Mammary epithelial cell (primary cell): ENCODE measurements at regions of chr16 and their contacts with region 1.

Region 1: DNA sequence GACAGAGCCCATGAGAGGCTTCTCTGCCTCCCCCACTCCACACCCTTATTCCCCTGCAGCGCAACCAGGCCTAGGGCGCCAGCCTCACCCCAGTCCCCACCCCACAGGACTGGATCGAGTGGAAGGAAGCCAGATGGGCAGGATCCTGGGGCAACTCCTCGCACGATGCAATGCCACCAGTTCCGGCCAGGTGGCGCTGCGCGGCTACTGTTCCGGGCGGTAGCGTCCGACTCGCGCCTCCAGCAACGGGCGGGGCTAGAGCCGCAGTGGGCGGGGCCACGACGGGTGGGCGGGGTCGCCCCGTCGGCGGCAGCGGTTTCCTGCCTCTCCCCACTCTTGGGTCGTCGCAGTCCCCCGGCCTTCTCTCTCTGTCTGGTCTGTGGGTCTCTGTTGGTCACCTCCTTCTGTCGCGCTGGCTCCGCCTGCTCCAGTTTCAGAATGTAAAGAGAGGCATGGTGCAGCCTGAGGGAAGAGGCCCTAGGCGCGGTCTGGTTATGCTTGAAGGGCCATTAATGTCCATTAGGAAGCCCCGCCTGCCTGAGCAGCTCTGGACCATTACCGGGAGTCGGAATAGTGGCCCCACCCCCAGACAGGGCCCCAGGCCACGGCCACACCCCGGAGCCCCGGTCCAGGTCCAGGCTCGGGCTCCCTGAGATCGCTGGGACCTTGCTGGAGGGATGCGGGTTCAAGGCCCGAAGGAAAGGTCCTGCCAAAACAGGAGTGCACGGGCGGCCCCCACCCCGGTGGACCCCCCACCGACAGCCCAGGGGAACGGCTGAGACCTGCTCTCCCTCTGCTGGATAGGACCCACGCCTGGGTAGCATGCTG is 3.4 kb upstream of the NHERF2 start:
- DNase-seq: peak; percentile 74
- H3K4me3 ChIP-seq: peak overlapping the region in 1 of 3 experiments; percentile 28
- H3K27ac ChIP-seq: no peak overlapping the region
- H3K4me1 ChIP-seq: peaks cover 20% of the 10 kb centered on the region
- H3K27me3 ChIP-seq: peaks cover 11% of the 10 kb centered on the region
- CTCF ChIP-seq: peak; percentile 82 to 91

Region 2: GRCh38 chr16:2047330-2048115 is 24.2 kb after region 1 on chr16 and contains the starts of genes NTHL1 and TSC2:
- CTCF ChIA-PET with region 1: interaction called, 10 read pairs
- dilution Hi-C with region 1: no loop called
- in situ Hi-C with region 1: no loop called
- intact Hi-C with region 1: no loop called
- DNase-seq: peak; percentile 93
- H3K4me3 ChIP-seq: peak within 1 kb of the TSS; percentile 63 to 90 (median 66)
- H3K27ac ChIP-seq: no peak within 1 kb of the TSS
- H3K4me1 ChIP-seq: peaks cover 19% of the 10 kb centered on the region
- H3K27me3 ChIP-seq: no peaks in the 10 kb centered on the region
- CTCF ChIP-seq: peak in 1 of 2 donors; percentile 48
- total RNA-seq, gene NTHL1: 11.3 to 23.2 TPM
- total RNA-seq, gene TSC2: 56.2 to 92.0 TPM

Region 3: DNA sequence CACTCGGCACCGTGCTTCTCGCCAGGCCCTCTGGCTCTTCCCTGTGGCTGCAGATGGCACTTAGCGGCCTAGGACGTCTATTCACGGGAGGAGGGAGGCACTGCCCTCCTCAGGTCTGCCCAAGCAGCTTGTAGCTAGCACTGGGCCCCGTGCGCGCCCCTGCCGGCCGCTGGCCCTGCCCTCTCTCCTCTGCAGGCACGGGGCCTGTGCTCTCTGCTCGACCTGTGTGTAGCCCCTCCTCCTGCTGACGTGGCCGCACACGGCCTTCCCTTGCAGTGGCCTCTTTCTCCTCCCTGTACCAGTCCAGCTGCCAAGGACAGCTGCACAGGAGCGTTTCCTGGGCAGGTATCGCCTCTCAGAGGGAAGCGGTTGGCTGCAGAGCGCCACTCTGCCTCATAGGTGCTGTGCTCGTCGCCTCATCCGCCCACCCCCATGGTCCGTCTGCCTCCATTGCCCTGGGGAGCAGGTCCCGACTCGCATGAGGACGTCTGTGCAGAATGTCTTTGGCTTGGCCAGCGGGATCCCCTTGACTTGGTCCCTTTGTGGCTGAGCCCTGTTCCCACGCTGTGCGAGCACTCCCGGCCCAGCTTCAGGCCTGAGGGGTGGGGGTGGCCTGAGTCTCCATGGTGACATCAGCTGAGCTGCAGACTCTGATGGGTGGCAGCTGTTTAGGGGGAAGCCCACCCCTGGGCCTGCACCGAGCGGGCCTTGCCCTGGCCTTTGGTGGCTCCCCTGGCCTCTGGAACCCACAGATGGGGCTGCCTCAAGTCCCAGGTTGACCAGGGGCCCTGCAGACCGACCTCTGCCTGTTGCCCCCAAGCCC is 59.1 kb after region 1 on chr16:
- CTCF ChIA-PET with region 1: interaction called, 4 read pairs
- dilution Hi-C with region 1: no loop called
- in situ Hi-C with region 1: no loop called
- intact Hi-C with region 1: loop called (anchors 1 kb)
- DNase-seq: peak; percentile 82
- H3K4me3 ChIP-seq: no peak overlapping the region
- H3K27ac ChIP-seq: no peak overlapping the region
- H3K4me1 ChIP-seq: peaks cover 22% of the 10 kb centered on the region
- H3K27me3 ChIP-seq: no peaks in the 10 kb centered on the region
- CTCF ChIP-seq: peak; percentile 4 to 40

Region 4: DNA sequence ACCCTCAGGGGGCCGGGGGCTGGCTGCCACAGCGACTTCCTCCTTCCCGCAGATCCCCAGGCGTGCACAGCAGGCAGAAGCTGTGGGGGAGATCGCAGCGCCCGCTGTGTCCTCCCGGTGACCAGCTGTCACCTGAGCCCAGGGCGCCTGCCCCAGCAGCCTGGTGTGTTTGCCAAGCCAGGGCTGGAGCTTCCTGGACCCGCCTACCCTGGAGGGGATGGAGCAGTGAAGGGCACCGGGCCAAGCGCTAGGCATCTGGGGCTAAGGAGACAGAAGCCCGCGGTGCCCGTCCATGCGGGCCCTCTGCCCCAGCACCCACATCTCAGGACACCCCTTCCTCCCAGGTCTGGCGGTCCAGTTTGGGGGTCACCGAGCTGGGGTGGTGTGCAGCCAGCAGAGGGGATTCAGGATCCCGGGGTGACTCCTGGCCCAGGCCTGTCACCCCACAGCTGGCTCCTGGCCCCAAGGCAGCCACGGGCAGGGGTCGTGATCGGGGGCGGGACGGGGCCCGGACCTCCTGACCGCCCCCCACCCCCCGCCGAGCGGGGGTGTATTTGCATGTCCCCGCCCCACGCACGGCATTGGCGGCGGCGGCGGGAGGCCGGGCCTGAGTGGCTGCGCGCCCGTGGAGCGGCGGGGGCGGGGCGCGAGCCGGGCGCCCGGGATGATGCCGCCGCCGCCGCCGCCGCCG is 124.8 kb after region 1 on chr16 and contains the start of gene RAB26:
- CTCF ChIA-PET with region 1: no interaction called
- dilution Hi-C with region 1: no loop called
- in situ Hi-C with region 1: loop called (anchors 10 kb)
- intact Hi-C with region 1: no loop called
- DNase-seq: peak; percentile 70
- H3K4me3 ChIP-seq: peak within 1 kb of the TSS in 2 of 3 experiments; percentile 32 to 36
- H3K27ac ChIP-seq: no peak within 1 kb of the TSS
- H3K4me1 ChIP-seq: peaks cover 58% of the 10 kb centered on the region
- H3K27me3 ChIP-seq: no peaks in the 10 kb centered on the region
- CTCF ChIP-seq: no peak
- total RNA-seq, gene RAB26: 0.33 to 1.0 TPM